HepG2 (cell line): ENCODE measurements at regions of chr2 and their contacts with region 1.

Region 1: DNA sequence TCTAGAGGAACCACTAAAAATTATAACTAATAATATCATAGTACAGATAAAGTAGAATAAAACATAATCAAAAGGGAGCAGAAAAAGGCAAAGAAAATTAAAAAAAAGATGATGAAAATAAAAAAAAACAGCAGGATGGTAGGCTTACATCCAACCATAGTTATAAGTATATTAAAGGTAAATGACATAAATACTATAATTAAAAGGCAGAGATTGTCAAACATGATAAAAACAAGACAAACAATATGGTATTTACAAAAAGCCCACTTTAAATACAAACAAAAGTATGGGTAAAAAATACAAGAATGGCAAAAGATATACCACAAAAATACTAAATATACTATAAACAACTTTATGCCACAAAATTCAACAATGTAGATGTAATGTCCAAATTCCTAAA is 24.4 kb downstream of the CCDC148 start:
- DNase-seq: no peak
- ATAC-seq: no peak
- H3K4me3 ChIP-seq: no peak overlapping the region
- H3K27ac ChIP-seq: no peak overlapping the region
- H3K4me1 ChIP-seq: no peaks in the 10 kb centered on the region
- H3K27me3 ChIP-seq: no peaks in the 10 kb centered on the region; a peak in 1 of 5 replicates
- CTCF ChIP-seq: no peak
- EP300 ChIP-seq: no peak
- POLR2A ChIP-seq: no peak
- RAD21 ChIP-seq: no peak

Region 2: GRCh38 chr2:158321264-158321663 is 110.9 kb before region 1 on chr2:
- CTCF ChIA-PET with region 1: no interaction called
- POLR2A ChIA-PET with region 1: no interaction called
- in situ Hi-C with region 1: no loop called
- intact Hi-C with region 1: no loop called
- DNase-seq: no peak
- ATAC-seq: no peak
- H3K4me3 ChIP-seq: no peak overlapping the region
- H3K27ac ChIP-seq: no peak overlapping the region
- H3K4me1 ChIP-seq: no peaks in the 10 kb centered on the region
- H3K27me3 ChIP-seq: no peaks in the 10 kb centered on the region
- CTCF ChIP-seq: no peak
- EP300 ChIP-seq: no peak
- POLR2A ChIP-seq: no peak
- RAD21 ChIP-seq: no peak

Region 3: DNA sequence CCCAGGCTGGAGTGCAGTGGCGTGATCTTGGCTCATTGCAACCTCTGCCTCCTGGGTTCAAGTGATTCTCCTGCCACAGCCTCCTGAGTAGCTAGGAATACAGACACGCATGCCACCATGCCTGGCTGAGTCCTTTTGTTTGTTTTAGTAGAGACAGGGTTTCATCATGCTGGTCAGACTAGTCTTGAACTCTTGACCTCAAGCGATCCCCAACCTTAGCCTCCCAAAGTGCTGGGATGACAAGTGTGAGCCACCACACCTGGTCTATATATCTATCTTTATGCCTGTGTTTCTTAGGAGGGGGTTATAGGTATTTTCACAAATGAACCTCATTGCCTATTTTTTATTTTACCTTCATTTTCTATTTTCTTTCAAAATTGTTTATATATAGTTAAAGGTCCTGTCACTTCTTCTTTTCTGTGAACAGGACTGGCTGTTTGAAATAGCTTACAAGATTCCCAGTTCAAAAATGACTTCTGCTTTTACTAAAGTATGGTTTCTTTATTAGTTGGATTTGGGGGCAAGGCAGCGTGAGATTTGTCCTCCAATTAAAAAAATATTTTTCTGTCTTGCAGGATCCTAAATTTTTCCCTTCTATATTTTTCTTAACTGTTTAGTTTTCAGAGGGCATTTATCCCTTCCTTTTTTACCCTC is 1263.8 kb after region 1 on chr2:
- CTCF ChIA-PET with region 1: no interaction called
- POLR2A ChIA-PET with region 1: no interaction called
- in situ Hi-C with region 1: no loop called
- intact Hi-C with region 1: loop called (anchors 5 kb)
- DNase-seq: no peak
- ATAC-seq: no peak
- H3K4me3 ChIP-seq: no peak overlapping the region
- H3K27ac ChIP-seq: no peak overlapping the region
- H3K4me1 ChIP-seq: no peaks in the 10 kb centered on the region
- H3K27me3 ChIP-seq: no peaks in the 10 kb centered on the region
- CTCF ChIP-seq: no peak
- EP300 ChIP-seq: no peak
- POLR2A ChIP-seq: no peak
- RAD21 ChIP-seq: no peak